Activated B cell treated with CpG ODN at 0.5 μM for 24 hours (primary cell): ENCODE measurements at regions of chr1 and their contacts with region 1.

Region 1: GRCh38 chr1:211133836-211134669 is at the start of gene KCNH1:
- DNase-seq: peak; percentile 59
- ATAC-seq: peak; percentile 87
- H3K4me3 Mint-ChIP-seq: peak within 1 kb of the TSS; percentile 67
- H3K27ac Mint-ChIP-seq: no peak within 1 kb of the TSS
- H3K4me1 Mint-ChIP-seq: peaks cover 7% of the 10 kb centered on the region
- H3K27me3 Mint-ChIP-seq: peaks cover 55% of the 10 kb centered on the region
- CTCF ChIP-seq: no peak
- total RNA-seq, gene KCNH1: not detected in 2 replicates

Region 2: GRCh38 chr1:209150114-209150513 is 1983.9 kb before region 1 on chr1:
- CTCF ChIA-PET with region 1: no interaction called
- POLR2A ChIA-PET with region 1: no interaction called
- intact Hi-C with region 1: no loop called
- DNase-seq: no peak
- ATAC-seq: no peak
- H3K4me3 Mint-ChIP-seq: no peak overlapping the region
- H3K27ac Mint-ChIP-seq: no peak overlapping the region
- H3K4me1 Mint-ChIP-seq: no peaks in the 10 kb centered on the region
- H3K27me3 Mint-ChIP-seq: no peaks in the 10 kb centered on the region
- CTCF ChIP-seq: no peak

Region 3: GRCh38 chr1:210143465-210144062 is 990.5 kb before region 1 on chr1:
- CTCF ChIA-PET with region 1: interaction called, 3 read pairs
- POLR2A ChIA-PET with region 1: no interaction called
- intact Hi-C with region 1: loop called (anchors 2 kb)
- DNase-seq: peak; percentile 16
- ATAC-seq: no peak
- H3K4me3 Mint-ChIP-seq: no peak overlapping the region
- H3K27ac Mint-ChIP-seq: no peak overlapping the region
- H3K4me1 Mint-ChIP-seq: no peaks in the 10 kb centered on the region
- H3K27me3 Mint-ChIP-seq: peaks cover 18% of the 10 kb centered on the region
- CTCF ChIP-seq: no peak

Region 4: GRCh38 chr1:210448297-210448892 is 685.7 kb before region 1 on chr1:
- CTCF ChIA-PET with region 1: interaction called, 4 read pairs
- POLR2A ChIA-PET with region 1: no interaction called
- intact Hi-C with region 1: loop called (anchors 1 kb)
- DNase-seq: no peak
- ATAC-seq: no peak
- H3K4me3 Mint-ChIP-seq: no peak overlapping the region
- H3K27ac Mint-ChIP-seq: no peak overlapping the region
- H3K4me1 Mint-ChIP-seq: peaks cover 7% of the 10 kb centered on the region
- H3K27me3 Mint-ChIP-seq: no peaks in the 10 kb centered on the region
- CTCF ChIP-seq: no peak